Activated T-helper 2 cell treated with anti-CD3 and anti-CD28 coated beads, Interferon-gamma antibody, Interleukin-2, Interleukin-4, amounts not matched to agents 10 μg/mL and 5 μg/mL and 100 μg/mL, durations not matched to agents 14 hours and 24 hours and 36 hours (primary cell): ENCODE measurements at regions of chr2 and their contacts with region 1.

Region 1: DNA sequence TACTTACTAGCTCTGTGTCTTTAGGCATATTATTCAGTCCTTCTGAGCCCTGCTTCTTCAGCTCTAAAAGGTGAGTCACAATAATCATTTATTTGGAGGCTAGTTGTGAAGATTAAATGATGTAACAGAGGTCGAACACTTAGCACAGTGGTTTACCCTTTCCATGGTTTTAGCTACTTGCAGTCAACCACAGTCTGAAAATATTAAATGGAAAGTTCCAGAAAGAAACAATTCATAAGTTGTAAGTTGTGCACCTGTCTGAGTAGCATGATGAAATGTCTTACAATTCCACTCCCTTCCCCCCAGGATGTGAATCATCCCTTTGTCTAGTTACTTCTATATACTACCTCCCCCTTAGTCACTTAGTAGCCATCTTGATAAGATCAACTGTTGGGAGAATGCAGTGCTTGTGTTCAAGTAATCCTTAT is 217.6 kb upstream of the THUMPD2 start:
- DNase-seq: no peak
- H3K4me3 Mint-ChIP-seq: no peak overlapping the region
- H3K27ac Mint-ChIP-seq: peak overlapping the region; percentile 87
- H3K4me1 Mint-ChIP-seq: peaks cover 47% of the 10 kb centered on the region
- H3K27me3 Mint-ChIP-seq: no peaks in the 10 kb centered on the region

Region 2: GRCh38 chr2:39938035-39938835 is 58.4 kb before region 1 on chr2:
- intact Hi-C with region 1: loop called (anchors 2 kb)
- DNase-seq: no peak
- H3K4me3 Mint-ChIP-seq: peak overlapping the region; percentile 79
- H3K27ac Mint-ChIP-seq: peak overlapping the region; percentile 98
- H3K4me1 Mint-ChIP-seq: peaks cover 68% of the 10 kb centered on the region
- H3K27me3 Mint-ChIP-seq: no peaks in the 10 kb centered on the region

Region 3: DNA sequence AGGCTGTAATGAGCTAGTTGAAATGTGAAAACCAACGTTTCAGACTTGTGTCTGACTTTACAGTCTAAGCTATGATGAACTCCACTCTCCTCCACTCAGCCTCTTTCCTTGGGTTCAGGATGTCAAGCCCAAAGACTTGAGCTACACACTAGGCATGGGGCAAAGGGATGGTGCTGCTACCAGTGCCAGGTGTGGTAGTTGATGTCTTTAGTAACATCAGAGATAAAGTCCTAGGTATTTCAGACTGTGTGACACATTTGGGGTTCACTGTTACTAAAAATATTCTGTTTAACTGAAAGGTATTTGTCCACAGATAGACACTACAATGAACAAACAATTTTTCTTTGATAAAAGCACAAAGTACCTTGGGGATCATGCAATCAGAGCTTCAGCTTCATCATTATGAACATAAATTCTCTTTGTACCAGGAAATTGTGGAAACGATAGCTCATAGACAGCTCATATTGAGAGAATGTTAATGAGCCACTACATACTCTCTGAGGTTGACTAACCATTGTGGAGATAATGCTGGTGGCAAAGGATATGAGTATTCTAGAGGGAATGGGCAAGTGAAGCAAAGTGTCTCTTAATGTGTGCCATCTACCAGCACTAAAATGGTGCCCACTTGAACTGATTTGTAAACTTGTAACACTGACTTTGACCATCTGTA is 36.1 kb after region 1 on chr2:
- intact Hi-C with region 1: loop called (anchors 1 kb)
- DNase-seq: no peak
- H3K4me3 Mint-ChIP-seq: no peak overlapping the region
- H3K27ac Mint-ChIP-seq: peak overlapping the region; percentile 75
- H3K4me1 Mint-ChIP-seq: peaks cover 45% of the 10 kb centered on the region
- H3K27me3 Mint-ChIP-seq: no peaks in the 10 kb centered on the region